Uterus (tissue), 4 donors: ENCODE measurements at regions of chr11 and their contacts with region 1.

Region 1: DNA sequence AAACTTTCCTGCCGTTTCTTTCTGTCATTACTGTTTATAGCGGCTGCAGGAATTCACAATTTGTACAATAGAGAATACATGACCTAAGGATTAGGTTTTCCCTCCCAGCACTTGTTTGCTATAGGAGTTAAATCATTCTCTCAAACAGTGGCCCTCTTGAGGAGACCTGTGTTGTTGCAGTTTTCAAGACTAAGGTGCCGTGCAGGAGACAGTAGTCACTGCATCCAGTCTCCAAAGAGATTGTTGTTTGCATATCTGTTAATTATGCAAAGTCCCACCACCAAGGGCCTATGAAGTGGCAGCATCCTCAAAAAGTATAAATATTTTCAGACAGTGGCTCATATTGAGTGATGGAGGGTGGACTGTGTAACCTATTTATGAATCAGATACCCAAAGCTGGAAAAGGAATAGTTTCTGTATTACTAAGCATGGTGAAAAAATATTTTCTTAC is 2.3 kb downstream of the PRSS23 start:
- DNase-seq: no peak
- H3K4me3 ChIP-seq: peak overlapping the region; percentile 60 to 89
- H3K27ac ChIP-seq: peak overlapping the region; percentile 91 to 94
- H3K4me1 ChIP-seq: peaks cover 0 to 14% of the 10 kb centered on the region in 2 donors
- H3K27me3 ChIP-seq: no peaks in the 10 kb centered on the region
- CTCF ChIP-seq: peak; percentile 55 to 67 (median 61)
- POLR2A ChIP-seq: peak in 1 of 2 donors; percentile 30

Region 2: DNA sequence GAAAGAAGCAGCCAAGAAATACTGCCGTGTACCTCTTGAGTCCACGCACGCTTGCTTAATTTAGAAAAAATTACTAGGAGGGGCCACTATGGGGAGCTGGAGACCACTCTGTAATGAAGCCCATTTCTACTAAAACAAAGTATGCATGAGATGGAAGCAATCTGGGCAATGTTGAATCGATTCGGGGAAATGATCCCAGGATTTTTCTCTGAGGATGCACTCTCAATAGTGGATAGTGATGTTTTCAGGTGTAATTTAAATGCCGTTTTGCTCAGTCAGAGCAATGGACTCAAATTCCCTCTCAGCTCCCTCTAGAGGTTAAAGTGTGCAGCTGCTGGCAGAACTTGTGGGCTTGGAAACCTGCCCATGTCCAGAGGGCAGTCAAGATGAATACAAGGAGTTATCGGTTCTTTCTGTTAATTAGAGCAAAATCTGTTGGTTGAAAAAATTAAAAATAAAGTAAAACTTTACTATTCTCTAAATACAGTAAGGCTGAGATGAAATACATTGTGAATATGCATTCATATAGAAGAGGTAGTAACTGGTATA is 194.3 kb before region 1 on chr11:
- intact Hi-C with region 1: loop called (anchors 10 kb)
- DNase-seq: peak; percentile 71 to 83
- H3K4me3 ChIP-seq: no peak overlapping the region
- H3K27ac ChIP-seq: peak overlapping the region; percentile 55 to 84
- H3K4me1 ChIP-seq: peaks cover 0 to 15% of the 10 kb centered on the region in 2 donors
- H3K27me3 ChIP-seq: no peaks in the 10 kb centered on the region
- CTCF ChIP-seq: peak; percentile 85 to 92 (median 88)
- POLR2A ChIP-seq: no peak

Region 3: DNA sequence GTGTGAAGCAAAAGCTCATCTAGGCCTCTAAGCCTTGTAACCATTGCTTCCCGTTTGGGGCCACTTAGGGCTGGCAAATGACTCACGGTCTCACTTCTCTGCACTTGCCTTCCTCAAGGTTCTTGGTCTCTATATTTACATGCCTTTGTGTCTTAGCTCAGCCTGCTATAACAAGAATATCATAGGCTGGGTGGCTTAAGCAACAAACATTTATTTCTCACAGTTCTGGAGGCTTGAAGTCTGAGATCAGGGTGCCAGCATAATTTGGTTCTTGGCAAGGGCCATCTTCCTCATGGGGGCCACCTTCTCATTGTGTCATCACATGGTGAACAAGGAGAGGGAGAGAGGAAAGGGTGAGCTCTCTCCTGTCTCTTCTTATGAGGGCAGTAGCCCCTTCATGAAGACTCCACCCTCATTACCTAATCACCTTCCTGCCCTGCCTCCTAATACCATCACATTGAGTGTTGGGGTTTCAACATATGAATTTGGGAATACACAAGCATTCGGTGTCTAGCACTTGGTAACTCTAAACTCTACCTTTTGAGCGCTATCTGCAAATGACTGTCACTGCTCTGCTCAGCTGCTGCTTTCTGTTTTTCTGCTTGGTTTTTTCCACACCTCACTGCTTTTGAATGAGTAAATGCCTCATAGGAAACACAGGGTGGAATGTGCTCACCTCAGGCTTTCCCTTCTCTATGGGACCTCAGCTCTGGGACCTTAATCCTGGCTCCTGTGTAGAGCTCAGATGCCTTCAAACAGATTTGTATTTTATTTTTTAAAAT is 114.0 kb before region 1 on chr11:
- intact Hi-C with region 1: loop called (anchors 10 kb)
- DNase-seq: no peak
- H3K4me3 ChIP-seq: no peak overlapping the region
- H3K27ac ChIP-seq: no peak overlapping the region
- H3K4me1 ChIP-seq: no peaks in the 10 kb centered on the region
- H3K27me3 ChIP-seq: no peaks in the 10 kb centered on the region
- CTCF ChIP-seq: no peak
- POLR2A ChIP-seq: no peak